HepG2 (cell line): ENCODE measurements at regions of chr4 and their contacts with region 1.

Region 1: DNA sequence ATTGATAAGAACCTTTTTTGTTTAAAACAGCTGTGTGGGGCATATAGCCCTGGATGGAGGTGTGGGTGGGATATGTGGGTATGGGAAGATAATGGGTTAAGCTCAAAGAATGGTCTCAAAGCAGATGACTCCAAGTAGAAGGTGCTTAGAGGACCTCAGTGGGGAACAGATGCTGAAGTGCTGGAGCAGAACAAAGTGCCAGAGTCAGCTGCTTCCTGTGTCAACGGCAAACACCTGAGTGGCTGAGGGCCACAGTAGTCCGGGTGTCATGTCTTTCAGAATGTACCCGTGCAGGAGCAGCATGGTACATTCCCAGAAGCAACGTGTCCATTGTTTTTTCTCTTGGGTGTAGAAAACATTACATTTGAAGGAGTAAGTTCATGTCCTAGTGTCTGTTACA is 210.6 kb downstream of the CCNG2 start:
- DNase-seq: no peak
- ATAC-seq: no peak
- H3K4me3 ChIP-seq: no peak overlapping the region
- H3K27ac ChIP-seq: no peak overlapping the region
- H3K4me1 ChIP-seq: no peaks in the 10 kb centered on the region
- H3K27me3 ChIP-seq: peaks cover 0 to 2% of the 10 kb centered on the region in 2 experiments; a peak in 1 of 5 replicates
- CTCF ChIP-seq: no peak
- EP300 ChIP-seq: no peak
- POLR2A ChIP-seq: no peak
- RAD21 ChIP-seq: no peak

Region 2: DNA sequence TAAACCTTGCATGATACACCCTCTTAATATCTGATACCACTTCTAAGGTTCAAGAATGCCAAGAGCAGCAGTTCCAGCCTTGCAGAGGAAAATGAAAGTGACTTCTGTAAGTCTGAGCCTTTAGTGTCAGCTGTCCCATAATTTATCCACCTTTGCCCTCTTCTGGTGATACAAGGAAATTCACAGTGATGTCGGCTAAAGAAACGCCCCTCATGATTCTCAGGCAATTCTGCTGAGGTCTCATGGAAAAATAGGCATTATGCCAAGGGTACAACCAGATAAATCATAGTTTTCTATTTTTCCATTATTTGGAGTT is 65.7 kb after region 1 on chr4:
- CTCF ChIA-PET with region 1: no interaction called
- POLR2A ChIA-PET with region 1: no interaction called
- in situ Hi-C with region 1: no loop called
- intact Hi-C with region 1: loop called (anchors 5 kb)
- DNase-seq: peak; percentile 53
- ATAC-seq: peak; percentile 86
- H3K4me3 ChIP-seq: no peak overlapping the region
- H3K27ac ChIP-seq: no peak overlapping the region
- H3K4me1 ChIP-seq: no peaks in the 10 kb centered on the region
- H3K27me3 ChIP-seq: no peaks in the 10 kb centered on the region
- CTCF ChIP-seq: peak; percentile 60
- EP300 ChIP-seq: no peak
- POLR2A ChIP-seq: no peak
- RAD21 ChIP-seq: no peak